ENCODE measurements at regions of chr19 and their contacts with region 1.

Region 1: DNA sequence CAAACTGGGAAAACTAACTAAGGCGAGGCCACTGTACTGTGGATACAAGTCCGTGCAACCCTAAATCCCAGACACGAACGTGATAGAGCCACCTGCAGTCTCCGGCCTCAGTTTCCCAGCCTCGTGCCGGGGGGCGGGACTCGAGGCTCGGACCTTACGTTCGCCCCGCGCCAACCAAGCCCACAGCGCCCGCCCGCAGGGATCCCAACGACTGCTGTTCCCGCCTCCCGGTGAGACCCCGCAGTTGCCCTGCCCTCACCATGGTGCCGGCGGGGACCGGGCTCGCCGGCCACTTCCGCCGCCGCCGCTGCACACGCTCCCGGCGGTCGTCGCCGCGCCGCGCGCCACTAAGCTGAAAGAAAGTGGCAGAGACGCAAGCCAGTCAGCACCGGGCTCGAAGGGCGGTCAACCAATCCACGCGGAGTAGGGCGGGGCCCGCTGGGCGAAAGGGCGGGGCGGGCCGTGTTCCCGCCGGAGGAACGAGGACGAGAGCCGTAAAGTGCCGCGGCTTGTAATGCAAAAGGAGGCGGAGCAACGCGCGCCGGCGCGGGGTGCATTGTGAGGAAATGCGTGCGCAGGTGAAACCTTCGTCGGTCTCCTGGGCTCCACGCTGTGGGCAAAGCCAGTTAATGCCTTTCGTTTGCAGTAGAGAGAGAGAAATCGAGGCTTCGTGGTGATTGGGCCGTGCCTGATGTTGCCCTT is at the start of gene LSM4:
- DNase-seq: peak; percentile 98 to 99 (median 99)
- ATAC-seq: peak; percentile 96 to 98 (median 96)
- H3K4me3 ChIP-seq: peak within 1 kb of the TSS; percentile 25 to 91 (median 81)
- H3K27ac ChIP-seq: peak within 1 kb of the TSS; percentile 62 to 98 (median 90)
- H3K4me1 ChIP-seq: peaks cover 2 to 60% (median 46%) of the 10 kb centered on the region in 12 donors
- H3K27me3 ChIP-seq: no peaks in the 10 kb centered on the region
- CTCF ChIP-seq: peak in 6 of 12 donors; percentile 5 to 38 (median 18)
- POLR2A ChIP-seq: peak; percentile 22 to 82
- total RNA-seq, gene LSM4: 65.8 to 167 (median 101) TPM

Region 2: DNA sequence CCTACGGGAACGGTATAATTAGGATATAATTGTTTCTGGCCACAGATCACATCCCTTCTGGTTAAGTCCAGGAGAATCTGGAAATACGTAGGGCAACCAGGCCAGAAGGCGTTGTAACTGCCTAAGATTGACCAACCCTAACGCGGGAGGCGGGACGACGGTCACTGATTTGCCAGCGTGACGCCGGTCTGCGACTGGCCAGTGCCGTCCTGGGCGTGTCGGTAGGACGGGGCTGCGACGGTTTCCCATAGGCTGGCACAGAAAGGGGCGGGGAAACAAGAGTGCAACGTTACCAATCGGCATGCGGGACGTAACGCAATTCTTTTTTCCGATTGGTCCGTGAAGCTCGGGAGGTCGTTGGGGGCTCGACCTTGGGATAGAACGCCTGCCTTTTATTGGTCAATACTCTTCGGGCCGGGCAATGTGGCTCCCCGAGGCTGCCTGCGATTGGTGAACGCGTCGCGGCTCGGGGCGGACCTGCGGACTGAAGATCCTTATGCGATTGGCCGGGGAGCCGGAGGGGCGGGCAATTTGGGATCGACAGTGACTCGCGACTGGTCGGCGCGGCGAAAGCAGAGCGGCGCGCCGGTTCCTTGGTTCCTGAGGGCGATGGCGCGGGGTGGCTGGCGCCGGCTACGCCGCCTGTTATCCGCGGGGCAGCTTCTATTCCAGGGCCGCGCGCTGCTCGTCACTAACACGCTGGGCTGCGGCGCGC is 130.1 kb before region 1 on chr19 and contains the start of gene MPV17L2:
- intact Hi-C with region 1: loop called in 1 of 10 experiments (anchors 10 kb)
- DNase-seq: peak; percentile 100
- ATAC-seq: peak; percentile 94 to 99 (median 96)
- H3K4me3 ChIP-seq: peak within 1 kb of the TSS; percentile 40 to 99 (median 84)
- H3K27ac ChIP-seq: peak within 1 kb of the TSS; percentile 78 to 99 (median 94)
- H3K4me1 ChIP-seq: peaks cover 0 to 25% (median 14%) of the 10 kb centered on the region in 12 donors
- H3K27me3 ChIP-seq: no peaks in the 10 kb centered on the region
- CTCF ChIP-seq: no peak
- POLR2A ChIP-seq: peak; percentile 82 to 89
- total RNA-seq, gene MPV17L2: 10.6 to 37.4 (median 14.8) TPM

Region 3: GRCh38 chr19:18291590-18292461 is 31.1 kb before region 1 on chr19:
- intact Hi-C with region 1: loop called in 1 of 10 experiments (anchors 1 kb)
- DNase-seq: peak; percentile 93 to 94 (median 93)
- ATAC-seq: peak; percentile 71 to 85 (median 82)
- H3K4me3 ChIP-seq: peak overlapping the region; percentile 64 to 98 (median 77)
- H3K27ac ChIP-seq: peak overlapping the region; percentile 96 to 100 (median 99)
- H3K4me1 ChIP-seq: peaks cover 0 to 43% (median 22%) of the 10 kb centered on the region in 12 donors
- H3K27me3 ChIP-seq: no peaks in the 10 kb centered on the region
- CTCF ChIP-seq: peak in 2 of 12 donors; percentile 2
- POLR2A ChIP-seq: peak in 1 of 2 donors; percentile 54

Region 4: DNA sequence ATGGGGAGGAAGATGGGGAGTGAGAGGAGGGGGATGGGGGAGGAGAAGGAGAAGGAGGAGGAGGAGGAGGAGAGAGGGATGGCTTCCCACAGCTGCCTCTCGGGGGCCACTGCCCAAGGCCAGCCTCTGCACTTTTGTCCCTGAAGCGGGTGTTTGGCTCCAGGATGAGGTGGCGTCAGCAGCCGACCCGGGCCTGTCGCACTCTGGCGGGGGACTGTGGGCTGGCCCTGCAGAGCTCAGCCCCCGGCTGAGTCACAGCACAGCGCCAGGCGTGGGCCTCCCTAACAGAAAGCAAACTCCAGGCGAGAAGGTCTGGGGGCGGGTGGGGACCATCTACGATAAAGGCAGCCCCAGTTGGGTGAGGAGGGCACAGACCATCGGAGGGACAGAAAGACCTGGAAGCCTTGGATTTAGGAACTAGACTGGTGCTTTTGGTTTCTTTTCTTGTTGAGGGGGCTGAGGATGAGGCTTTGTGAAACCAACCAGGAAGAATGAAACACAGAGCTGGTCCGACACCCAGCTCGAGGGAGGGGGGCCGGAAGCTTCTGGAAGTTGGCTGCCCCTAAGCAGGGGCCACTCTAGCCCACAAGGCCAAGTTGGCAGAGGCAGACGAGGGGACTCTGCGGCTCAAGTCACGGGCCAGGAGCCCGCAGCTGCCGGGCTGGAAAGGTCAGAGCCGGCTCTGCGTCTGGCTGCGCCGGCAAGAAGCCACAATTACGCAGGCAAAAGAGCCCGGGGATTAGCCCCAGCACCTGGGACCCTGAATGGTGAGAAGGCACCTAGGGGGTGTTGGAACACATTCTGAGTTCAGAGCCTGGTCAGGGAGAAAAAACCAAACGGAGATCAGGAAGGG is 18.2 kb before region 1 on chr19:
- intact Hi-C with region 1: loop called in 6 of 10 experiments (anchors 2 kb)
- DNase-seq: peak; percentile 89 to 95 (median 93)
- ATAC-seq: peak; percentile 76 to 89 (median 84)
- H3K4me3 ChIP-seq: peak overlapping the region in 11 of 12 donors; percentile 13 to 62 (median 46)
- H3K27ac ChIP-seq: peak overlapping the region; percentile 89 to 100 (median 98)
- H3K4me1 ChIP-seq: peaks cover 18 to 75% (median 54%) of the 10 kb centered on the region in 12 donors
- H3K27me3 ChIP-seq: no peaks in the 10 kb centered on the region
- CTCF ChIP-seq: peak in 2 of 12 donors; percentile 12 to 21
- POLR2A ChIP-seq: peak in 1 of 2 donors; percentile 76